Head of caudate nucleus (tissue), 42 donors: ENCODE measurements at regions of chr11 and their contacts with region 1.

Region 1: GRCh38 chr11:77547863-77548551 is 41.7 kb upstream of the AQP11 start:
- DNase-seq: peak in 31 of 42 donors; percentile 14 to 82 (median 54)

Region 2: GRCh38 chr11:77127232-77127911 is 420.6 kb before region 1 on chr11:
- intact Hi-C with region 1: loop called (anchors 10 kb)
- DNase-seq: peak; percentile 16 to 88 (median 72)

Region 3: GRCh38 chr11:77187776-77188632 is 360.0 kb before region 1 on chr11:
- intact Hi-C with region 1: loop called (anchors 10 kb)
- DNase-seq: peak; percentile 46 to 94 (median 85)

Region 4: DNA sequence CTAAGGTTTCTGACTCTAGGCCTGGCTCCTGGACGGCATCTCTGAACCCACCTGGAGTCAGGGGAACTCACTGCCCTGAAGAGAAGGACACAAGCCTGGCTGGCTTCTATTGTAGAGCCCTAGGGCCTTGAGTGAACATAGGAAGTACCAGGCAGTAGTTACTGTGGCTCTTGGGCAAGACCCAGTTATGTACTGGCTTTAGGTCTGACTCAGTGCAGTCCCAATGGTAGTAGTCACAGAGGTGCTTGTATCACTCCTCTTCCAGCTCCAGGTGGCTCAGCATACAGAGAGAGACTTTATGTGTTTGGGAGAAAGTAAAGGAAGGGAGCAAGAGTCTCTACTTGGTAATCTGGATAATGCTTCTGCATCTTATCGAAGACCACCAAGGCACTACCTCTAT is 60.2 kb before region 1 on chr11:
- intact Hi-C with region 1: no loop called
- DNase-seq: no peak

Region 5: GRCh38 chr11:77687085-77687484 is 139.1 kb after region 1 on chr11:
- intact Hi-C with region 1: no loop called
- DNase-seq: no peak